CD8-positive, alpha-beta T cell (primary cell): ENCODE measurements at regions of chr11 and their contacts with region 1.

Region 1: GRCh38 chr11:124746621-124747243 is 5.3 kb downstream of the VSIG2 start:
- DNase-seq: peak; percentile 64 to 90 (median 79)
- ATAC-seq: peak; percentile 92
- H3K4me3 ChIP-seq: peak overlapping the region; percentile 87 to 98
- H3K4me3 Mint-ChIP-seq: peak overlapping the region; percentile 95
- H3K27ac ChIP-seq: peak overlapping the region; percentile 58 to 80
- H3K27ac Mint-ChIP-seq: peak overlapping the region; percentile 91
- H3K4me1 ChIP-seq: peaks cover 11% of the 10 kb centered on the region
- H3K4me1 Mint-ChIP-seq: peaks cover 15% of the 10 kb centered on the region
- H3K27me3 ChIP-seq: no peaks in the 10 kb centered on the region
- H3K27me3 Mint-ChIP-seq: peaks cover 2% of the 10 kb centered on the region
- CTCF ChIP-seq: peak; percentile 55

Region 2: DNA sequence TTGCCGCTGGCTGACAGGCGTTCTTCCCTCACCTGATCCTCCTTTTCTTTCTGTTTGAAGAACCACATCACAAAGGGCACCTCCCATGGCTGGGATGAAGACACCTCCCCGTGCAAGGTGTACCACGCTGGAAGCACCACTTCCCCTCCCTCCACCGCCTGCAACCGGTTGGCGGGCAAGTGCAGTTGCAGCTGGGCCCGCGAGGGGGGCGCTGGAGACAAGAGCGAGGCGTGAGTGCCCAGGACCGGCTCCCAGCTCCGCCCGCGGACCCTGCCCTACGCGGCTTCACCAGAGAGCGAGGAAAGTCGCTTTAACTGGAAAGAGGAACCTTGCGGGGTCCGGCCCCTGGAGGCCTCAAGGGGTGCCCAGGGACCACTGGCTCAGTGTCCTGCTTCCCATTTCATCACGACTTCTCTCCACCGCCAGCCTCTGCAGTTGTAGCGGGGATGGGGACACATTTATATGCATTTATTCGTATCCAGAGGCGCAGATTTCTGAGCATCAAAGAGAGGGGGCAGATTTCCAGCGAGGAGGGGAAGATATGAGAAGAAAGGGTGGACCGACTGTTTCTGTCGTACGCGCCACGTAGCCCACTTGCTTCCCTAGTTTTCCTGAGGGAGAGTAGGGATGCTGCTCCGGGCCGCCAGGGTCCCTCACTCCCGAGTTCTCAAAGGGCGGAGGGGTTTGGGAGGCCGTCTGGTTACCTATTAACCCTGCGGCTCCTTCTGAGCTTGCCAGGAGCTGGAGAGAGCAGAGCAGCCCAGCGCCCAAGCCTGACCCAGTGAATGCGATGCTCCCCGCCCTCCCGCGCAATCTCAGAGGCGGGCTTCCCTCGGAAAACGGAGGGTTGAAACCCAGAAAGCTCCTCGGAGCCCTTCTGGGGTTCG is 11.8 kb after region 1 on chr11:
- CTCF ChIA-PET with region 1: interaction called, 105 read pairs
- POLR2A ChIA-PET with region 1: interaction called, 17 read pairs
- intact Hi-C with region 1: loop called (anchors 1 kb)
- DNase-seq: peak; percentile 42 to 78 (median 70)
- ATAC-seq: peak; percentile 72
- H3K4me3 ChIP-seq: peak overlapping the region; percentile 6 to 16
- H3K4me3 Mint-ChIP-seq: peak overlapping the region; percentile 58
- H3K27ac ChIP-seq: no peak overlapping the region
- H3K27ac Mint-ChIP-seq: no peak overlapping the region
- H3K4me1 ChIP-seq: peaks cover 34% of the 10 kb centered on the region
- H3K4me1 Mint-ChIP-seq: peaks cover 33% of the 10 kb centered on the region
- H3K27me3 ChIP-seq: peaks cover 32 to 39% of the 10 kb centered on the region in 2 experiments
- H3K27me3 Mint-ChIP-seq: peaks cover 40% of the 10 kb centered on the region
- CTCF ChIP-seq: peak; percentile 81

Region 3: DNA sequence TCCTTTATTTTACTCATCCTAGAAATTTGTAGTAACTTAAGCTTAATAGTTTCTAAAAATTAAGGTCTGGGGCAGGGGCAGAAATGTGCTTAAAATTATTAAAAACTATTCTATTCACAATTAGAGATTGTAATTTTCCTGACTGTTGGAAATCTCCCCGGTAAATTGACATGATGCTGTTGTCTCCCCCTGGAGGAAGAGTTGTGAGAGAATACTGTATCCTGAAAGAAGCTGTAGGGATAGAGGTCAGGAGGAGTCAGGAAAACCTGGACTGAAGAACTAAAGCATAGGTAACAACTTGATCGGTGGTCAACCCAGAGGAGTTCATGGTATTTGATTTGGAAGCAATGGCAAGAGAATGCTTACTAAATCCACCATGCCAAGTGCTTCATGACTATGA is 31.5 kb after region 1 on chr11:
- CTCF ChIA-PET with region 1: interaction called, 15 read pairs
- POLR2A ChIA-PET with region 1: interaction called, 3 read pairs
- intact Hi-C with region 1: no loop called
- DNase-seq: no peak
- ATAC-seq: no peak
- H3K4me3 ChIP-seq: no peak overlapping the region
- H3K4me3 Mint-ChIP-seq: no peak overlapping the region
- H3K27ac ChIP-seq: no peak overlapping the region
- H3K27ac Mint-ChIP-seq: no peak overlapping the region
- H3K4me1 ChIP-seq: peaks cover 19% of the 10 kb centered on the region
- H3K4me1 Mint-ChIP-seq: peaks cover 22% of the 10 kb centered on the region
- H3K27me3 ChIP-seq: no peaks in the 10 kb centered on the region
- H3K27me3 Mint-ChIP-seq: no peaks in the 10 kb centered on the region
- CTCF ChIP-seq: no peak